Tibial artery (tissue), 4 donors: ENCODE measurements at regions of chr12 and their contacts with region 1.

Region 1: DNA sequence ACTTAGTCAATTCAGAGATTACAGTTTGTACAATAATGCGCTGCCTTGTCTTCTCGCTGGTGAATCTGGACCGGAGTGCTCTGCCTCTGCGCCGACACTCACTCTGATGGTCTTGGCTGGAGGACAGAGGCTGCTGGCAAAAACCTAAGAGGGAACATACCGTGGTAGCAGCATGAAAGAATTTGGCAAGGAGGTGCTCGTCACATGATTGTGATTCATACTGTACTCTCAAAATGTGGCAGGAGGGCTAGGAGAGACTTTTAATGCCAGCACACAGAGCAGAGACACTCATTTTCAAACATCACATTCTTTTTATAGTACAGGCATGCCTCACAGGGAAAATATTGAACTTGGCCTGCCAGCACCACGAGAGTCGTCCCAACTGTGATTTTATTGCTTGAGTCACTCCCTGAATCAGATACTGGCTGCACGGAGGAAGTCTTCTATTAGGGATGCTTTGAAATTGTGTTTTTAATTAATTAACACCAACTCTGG is 67.8 kb downstream of the HMGA2 start:
- DNase-seq: peak; percentile 89 to 90
- H3K4me3 ChIP-seq: no peak overlapping the region
- H3K27ac ChIP-seq: peak overlapping the region in 1 of 2 donors; percentile 21
- H3K4me1 ChIP-seq: peaks cover 0 to 23% (median 19%) of the 10 kb centered on the region in 4 donors
- H3K27me3 ChIP-seq: peaks cover 0 to 11% of the 10 kb centered on the region in 2 donors
- CTCF ChIP-seq: no peak

Region 2: GRCh38 chr12:65823513-65824375 is 68.3 kb before region 1 on chr12:
- intact Hi-C with region 1: loop called (anchors 10 kb)
- DNase-seq: peak in 1 of 2 donors; percentile 65
- H3K4me3 ChIP-seq: peak overlapping the region; percentile 51 to 64
- H3K27ac ChIP-seq: no peak overlapping the region
- H3K4me1 ChIP-seq: peaks cover 4 to 36% (median 28%) of the 10 kb centered on the region in 4 donors
- H3K27me3 ChIP-seq: peaks cover 0 to 70% of the 10 kb centered on the region in 2 donors
- CTCF ChIP-seq: no peak